Sciatic nerve (tissue), 2 donors: ENCODE measurements at regions of chr3 and their contacts with region 1.

Region 1: DNA sequence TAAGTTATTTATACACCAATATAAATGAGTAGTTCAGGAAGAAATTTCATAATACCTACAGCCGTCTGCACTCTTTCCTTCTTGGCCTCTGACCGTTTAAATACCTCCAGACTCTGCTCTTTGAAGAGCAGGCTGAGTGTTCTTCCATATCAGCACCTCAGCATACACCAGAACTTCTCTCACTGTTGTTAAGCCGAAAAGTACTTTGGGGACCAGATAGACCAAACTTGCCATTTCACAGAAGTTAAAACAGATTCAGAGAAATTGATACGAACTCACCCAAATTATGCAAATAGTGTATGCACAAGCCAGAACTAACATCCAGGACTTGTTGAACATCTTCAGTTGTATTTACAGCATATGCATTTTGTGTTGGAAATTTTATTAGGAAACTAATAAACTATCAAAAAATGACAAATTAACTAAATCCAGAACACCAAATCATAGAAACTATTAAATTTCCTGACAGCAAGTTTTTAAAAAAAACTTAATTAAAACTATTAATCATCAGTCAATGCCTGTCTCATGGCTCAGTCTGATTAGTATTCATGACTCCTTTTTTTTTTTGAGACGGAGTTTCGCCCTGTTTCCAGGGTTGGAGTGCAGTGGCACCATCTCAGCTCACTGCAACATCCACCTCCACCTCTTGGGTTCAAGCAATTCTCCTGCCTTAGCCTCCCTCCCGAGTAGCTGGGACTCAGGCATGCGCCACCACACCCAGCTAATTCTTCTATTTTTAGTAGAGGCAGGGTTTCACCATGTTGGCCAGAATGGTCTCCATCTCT is 24.1 kb downstream of the CGGBP1 start:
- DNase-seq: no peak
- ATAC-seq: no peak

Region 2: DNA sequence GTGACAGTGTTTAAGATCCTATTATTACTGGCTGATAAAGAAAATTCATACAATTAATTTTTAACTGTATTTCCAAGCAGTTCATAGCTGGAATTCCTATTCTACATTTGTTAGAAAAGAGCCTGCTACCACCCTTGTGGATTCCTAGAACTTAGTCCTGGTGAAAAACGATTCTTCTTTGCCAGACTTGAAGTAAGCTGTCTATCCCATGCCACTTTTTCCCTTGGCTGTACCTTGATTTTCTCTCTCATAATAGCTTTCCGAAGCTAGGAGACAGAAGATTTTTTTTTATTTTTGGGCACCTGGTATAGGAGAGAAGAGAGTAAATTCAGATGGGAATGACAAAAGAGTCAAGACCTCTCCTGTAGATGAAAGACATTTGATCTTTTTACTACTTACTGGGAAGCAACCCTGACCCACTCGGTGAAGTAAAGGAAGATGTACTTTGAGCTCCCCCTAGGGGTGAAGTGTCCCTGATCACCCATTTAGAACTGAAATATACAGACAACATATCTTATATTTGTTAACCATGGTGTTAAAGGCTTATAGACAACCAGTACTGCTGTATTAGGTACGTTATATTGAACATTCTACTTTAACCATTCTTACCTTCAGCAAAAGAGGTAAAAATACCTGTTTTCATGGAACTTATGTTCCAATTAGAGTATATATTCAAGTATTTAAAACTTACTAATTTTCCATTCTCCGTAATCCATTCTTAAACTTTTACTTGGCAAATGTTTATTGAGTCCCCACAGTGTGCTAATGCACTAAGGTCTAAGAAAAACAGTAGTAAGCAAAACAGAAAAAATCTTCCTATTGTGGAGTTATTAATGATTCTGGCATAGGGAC is 78.9 kb after region 1 on chr3:
- intact Hi-C with region 1: loop called (anchors 2 kb)
- DNase-seq: peak; percentile 50
- ATAC-seq: peak; percentile 78

Region 3: DNA sequence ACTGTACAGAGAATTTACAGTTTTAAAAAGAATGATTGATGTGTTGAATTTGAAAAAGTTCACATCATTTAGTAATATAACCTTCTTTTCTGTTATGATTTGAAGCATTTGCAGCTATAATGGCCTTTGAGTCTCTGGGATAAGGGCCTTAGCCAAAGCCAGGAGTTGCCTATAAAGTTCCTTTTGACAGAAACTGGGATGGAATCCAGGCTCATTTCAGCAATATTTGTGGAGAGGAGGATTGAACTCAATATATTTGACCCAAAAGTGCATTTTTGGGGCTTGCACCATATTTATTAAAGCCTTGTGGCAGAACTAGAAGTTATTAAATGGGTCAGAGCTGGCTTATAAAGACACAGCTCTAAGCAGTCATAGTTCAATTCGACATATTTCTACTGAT is 724.0 kb after region 1 on chr3:
- intact Hi-C with region 1: no loop called
- DNase-seq: no peak
- ATAC-seq: no peak